ENCODE measurements at regions of chr10 and their contacts with region 1.

Region 1: DNA sequence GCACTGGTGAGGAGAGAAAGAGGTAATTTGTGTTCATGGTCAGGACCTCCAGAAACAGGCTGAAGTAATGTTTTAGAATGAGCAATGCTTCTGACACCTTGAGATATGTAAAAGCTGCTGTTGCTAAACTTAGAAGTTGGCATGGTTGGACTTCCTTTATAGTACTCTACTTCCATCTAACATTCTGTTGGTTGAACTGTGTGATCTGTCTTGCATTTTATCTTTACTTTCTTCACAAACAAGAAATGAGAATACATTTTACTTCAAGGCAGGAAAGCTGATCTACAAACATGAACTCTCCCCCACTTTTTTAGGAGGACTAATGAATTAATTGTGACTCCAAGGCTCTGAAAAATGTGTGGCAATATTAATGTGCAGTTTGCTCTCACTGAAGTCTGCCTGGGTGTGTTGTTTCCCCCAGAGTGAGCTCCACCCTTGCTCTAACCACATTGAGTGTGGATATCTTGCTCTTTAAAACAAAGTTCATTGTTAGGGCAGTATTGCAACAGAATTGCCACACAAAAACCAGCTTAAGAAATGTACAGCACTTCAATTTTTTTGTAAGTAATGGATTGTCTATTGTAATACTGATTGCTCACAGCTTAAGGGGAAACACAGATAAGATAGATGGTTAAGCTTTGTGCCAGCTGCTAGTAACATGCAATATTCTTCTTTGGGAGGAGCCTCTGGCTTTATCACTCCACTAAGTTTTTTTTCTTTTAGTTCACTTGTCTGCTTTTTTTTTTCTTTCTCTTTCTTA is 69.0 kb downstream of the ADD3 start:
- DNase-seq: peak in 9 of 14 experiments; percentile 12 to 82 (median 29)
- ATAC-seq: peak; percentile 72
- H3K4me3 ChIP-seq: peak overlapping the region; percentile 54
- H3K4me3 Mint-ChIP-seq: peak overlapping the region; percentile 80
- H3K27ac ChIP-seq: peak overlapping the region; percentile 19 to 66
- H3K27ac Mint-ChIP-seq: peak overlapping the region; percentile 85
- H3K4me1 ChIP-seq: peaks cover 54% of the 10 kb centered on the region
- H3K4me1 Mint-ChIP-seq: peaks cover 88% of the 10 kb centered on the region
- H3K27me3 ChIP-seq: no peaks in the 10 kb centered on the region
- H3K27me3 Mint-ChIP-seq: no peaks in the 10 kb centered on the region
- CTCF ChIP-seq: no peak

Region 2: GRCh38 chr10:110036640-110037039 is 40.1 kb before region 1 on chr10:
- CTCF ChIA-PET with region 1: no interaction called
- POLR2A ChIA-PET with region 1: interaction called, 3 read pairs
- intact Hi-C with region 1: loop called in 1 of 2 experiments (anchors 5 kb)
- DNase-seq: no peak
- ATAC-seq: no peak
- H3K4me3 ChIP-seq: no peak overlapping the region
- H3K4me3 Mint-ChIP-seq: peak overlapping the region; percentile 14
- H3K27ac ChIP-seq: no peak overlapping the region
- H3K27ac Mint-ChIP-seq: peak overlapping the region; percentile 56
- H3K4me1 ChIP-seq: peaks cover 45% of the 10 kb centered on the region
- H3K4me1 Mint-ChIP-seq: peaks cover 98% of the 10 kb centered on the region
- H3K27me3 ChIP-seq: no peaks in the 10 kb centered on the region
- H3K27me3 Mint-ChIP-seq: no peaks in the 10 kb centered on the region
- CTCF ChIP-seq: no peak

Region 3: DNA sequence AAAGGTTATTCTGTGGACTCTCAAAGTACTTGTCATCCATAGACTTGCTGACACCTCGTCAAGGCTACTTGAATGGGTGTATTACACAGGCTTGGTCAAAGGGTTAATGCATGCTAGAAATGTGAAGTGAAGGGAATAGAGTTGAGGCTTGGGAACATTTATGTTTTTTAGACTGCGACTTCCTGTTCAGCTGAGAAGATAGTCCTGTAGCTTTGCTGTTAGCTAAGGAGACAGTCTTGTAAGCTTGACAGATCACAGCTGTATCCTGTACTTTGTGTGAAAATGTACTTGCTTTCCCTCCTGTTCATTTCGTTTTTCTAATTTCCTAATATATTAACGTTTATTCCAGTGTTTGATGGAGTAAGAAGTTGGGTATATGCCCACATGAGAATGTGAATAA is 16.8 kb before region 1 on chr10:
- CTCF ChIA-PET with region 1: interaction called, 4 read pairs
- POLR2A ChIA-PET with region 1: interaction called, 27 read pairs
- intact Hi-C with region 1: loop called in 1 of 2 experiments (anchors 2 kb)
- DNase-seq: no peak
- ATAC-seq: peak; percentile 55
- H3K4me3 ChIP-seq: no peak overlapping the region
- H3K4me3 Mint-ChIP-seq: peak overlapping the region; percentile 67
- H3K27ac ChIP-seq: peak overlapping the region in 1 of 2 donors; percentile 18
- H3K27ac Mint-ChIP-seq: peak overlapping the region; percentile 79
- H3K4me1 ChIP-seq: peaks cover 40% of the 10 kb centered on the region
- H3K4me1 Mint-ChIP-seq: peaks cover 90% of the 10 kb centered on the region
- H3K27me3 ChIP-seq: no peaks in the 10 kb centered on the region
- H3K27me3 Mint-ChIP-seq: no peaks in the 10 kb centered on the region
- CTCF ChIP-seq: no peak

Region 4: GRCh38 chr10:110093722-110094121 is 17.0 kb after region 1 on chr10:
- CTCF ChIA-PET with region 1: interaction called, 3 read pairs
- POLR2A ChIA-PET with region 1: interaction called, 9 read pairs
- intact Hi-C with region 1: loop called in 1 of 2 experiments (anchors 2 kb)
- DNase-seq: no peak
- ATAC-seq: no peak
- H3K4me3 ChIP-seq: no peak overlapping the region
- H3K4me3 Mint-ChIP-seq: peak overlapping the region; percentile 5
- H3K27ac ChIP-seq: no peak overlapping the region
- H3K27ac Mint-ChIP-seq: peak overlapping the region; percentile 15
- H3K4me1 ChIP-seq: peaks cover 12% of the 10 kb centered on the region
- H3K4me1 Mint-ChIP-seq: peaks cover 90% of the 10 kb centered on the region
- H3K27me3 ChIP-seq: no peaks in the 10 kb centered on the region
- H3K27me3 Mint-ChIP-seq: no peaks in the 10 kb centered on the region
- CTCF ChIP-seq: no peak

Region 5: GRCh38 chr10:110107887-110108286 is 31.1 kb after region 1 on chr10:
- CTCF ChIA-PET with region 1: interaction called, 8 read pairs
- POLR2A ChIA-PET with region 1: interaction called, 6 read pairs
- intact Hi-C with region 1: loop called in 1 of 2 experiments (anchors 2 kb)
- DNase-seq: no peak
- ATAC-seq: peak; percentile 61
- H3K4me3 ChIP-seq: no peak overlapping the region
- H3K4me3 Mint-ChIP-seq: no peak overlapping the region
- H3K27ac ChIP-seq: no peak overlapping the region
- H3K27ac Mint-ChIP-seq: peak overlapping the region; percentile 15
- H3K4me1 ChIP-seq: no peaks in the 10 kb centered on the region
- H3K4me1 Mint-ChIP-seq: peaks cover 63% of the 10 kb centered on the region
- H3K27me3 ChIP-seq: no peaks in the 10 kb centered on the region
- H3K27me3 Mint-ChIP-seq: no peaks in the 10 kb centered on the region
- CTCF ChIP-seq: no peak

Measured in CD4-positive, alpha-beta T cell (primary cell).